T-cell (primary cell): ENCODE measurements at regions of chr6 and their contacts with region 1.

Region 1: GRCh38 chr6:42028234-42029061 is 21.9 kb upstream of the TAF8 start:
- DNase-seq: peak in 1 of 35 experiments; percentile 35
- ATAC-seq: peak in 2 of 4 experiments; percentile 22 to 25
- H3K4me3 ChIP-seq: no peak overlapping the region
- H3K4me3 Mint-ChIP-seq: peak overlapping the region; percentile 62 to 81 (median 62)
- H3K27ac ChIP-seq: peak overlapping the region; percentile 57
- H3K27ac Mint-ChIP-seq: peak overlapping the region; percentile 94
- H3K4me1 ChIP-seq: peaks cover 57 to 97% of the 10 kb centered on the region in 2 experiments
- H3K4me1 Mint-ChIP-seq: peaks cover 94 to 99% (median 96%) of the 10 kb centered on the region in 3 donors
- H3K27me3 ChIP-seq: no peaks in the 10 kb centered on the region
- H3K27me3 Mint-ChIP-seq: no peaks in the 10 kb centered on the region

Region 2: DNA sequence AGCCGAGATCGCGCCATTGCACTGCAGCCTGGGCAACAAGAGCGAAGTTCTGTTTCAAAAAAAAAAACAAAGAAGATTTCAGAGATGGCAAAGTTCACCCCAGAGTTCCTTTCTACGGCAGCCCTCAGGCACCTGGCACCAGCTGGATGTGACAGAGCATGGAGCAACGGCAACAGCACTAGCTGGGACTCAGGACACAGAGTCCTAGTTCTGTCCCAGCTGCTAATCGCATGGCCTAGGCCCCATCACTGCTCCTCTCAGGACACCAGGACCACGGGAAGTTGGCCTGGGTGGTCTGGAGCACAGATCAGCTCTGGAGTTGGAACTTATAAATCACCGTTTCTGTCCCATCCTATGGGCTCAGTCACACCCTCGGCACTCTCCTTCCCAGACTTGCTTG is 282.3 kb before region 1 on chr6:
- CTCF ChIA-PET with region 1: no interaction called
- POLR2A ChIA-PET with region 1: interaction called in 1 of 2 experiments, 10 read pairs
- DNase-seq: no peak
- ATAC-seq: no peak
- H3K4me3 ChIP-seq: no peak overlapping the region
- H3K4me3 Mint-ChIP-seq: no peak overlapping the region
- H3K27ac ChIP-seq: no peak overlapping the region
- H3K27ac Mint-ChIP-seq: no peak overlapping the region
- H3K4me1 ChIP-seq: no peaks in the 10 kb centered on the region
- H3K4me1 Mint-ChIP-seq: no peaks in the 10 kb centered on the region
- H3K27me3 ChIP-seq: peaks cover 0 to 13% of the 10 kb centered on the region in 2 experiments
- H3K27me3 Mint-ChIP-seq: no peaks in the 10 kb centered on the region